ENCODE measurements at regions of chr9 and their contacts with region 1.

Region 1: DNA sequence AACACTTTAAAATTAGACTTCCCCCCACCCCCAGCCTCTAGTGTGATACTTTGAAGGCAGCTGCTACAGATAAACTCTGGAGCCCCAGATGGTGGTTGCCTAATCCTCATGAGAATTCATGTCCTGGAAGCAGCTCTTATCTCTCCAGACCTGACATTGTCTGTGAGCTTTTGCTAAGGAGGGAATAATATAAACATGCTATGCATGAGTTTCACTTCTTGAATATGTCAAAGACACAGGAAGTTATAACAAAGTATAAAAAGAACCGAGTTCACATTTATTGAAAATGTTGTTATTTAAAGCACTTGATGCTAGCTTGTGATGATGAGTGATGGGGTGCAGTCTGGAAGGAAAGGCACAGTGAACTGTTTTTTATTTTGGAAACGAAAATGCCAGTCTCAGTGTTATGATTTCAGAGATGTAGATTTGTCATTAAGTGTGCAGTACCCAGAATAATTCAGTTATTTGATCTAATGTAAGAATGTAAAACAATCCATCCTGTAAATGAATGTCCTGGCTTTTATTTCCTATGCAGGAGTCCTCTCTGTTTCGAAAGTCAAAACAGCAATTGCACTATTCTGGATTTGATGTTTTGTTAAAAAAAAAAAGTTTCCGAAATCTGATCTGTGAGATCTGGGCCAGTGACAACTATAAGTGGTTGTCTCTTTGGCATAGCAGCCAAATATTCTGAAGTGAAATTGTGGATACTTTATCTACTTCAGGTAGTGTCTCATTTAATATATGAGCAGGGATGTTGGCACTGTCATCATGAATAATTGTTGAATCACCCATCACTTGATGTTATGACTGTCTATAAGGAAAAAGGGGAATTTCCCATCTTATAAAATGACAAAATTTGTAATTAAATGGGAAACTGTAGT is 77.0 kb downstream of the ZCCHC7 start:
- DNase-seq: peak; percentile 83
- ATAC-seq: peak; percentile 79
- H3K4me3 ChIP-seq: peak overlapping the region in 3 of 5 experiments; percentile 13 to 35 (median 21)
- H3K4me3 Mint-ChIP-seq: peak overlapping the region; percentile 76
- H3K27ac ChIP-seq: peak overlapping the region; percentile 81 to 87
- H3K27ac Mint-ChIP-seq: peak overlapping the region; percentile 87
- H3K4me1 ChIP-seq: peaks cover 83 to 91% of the 10 kb centered on the region in 2 donors
- H3K4me1 Mint-ChIP-seq: peaks cover 82% of the 10 kb centered on the region
- H3K27me3 ChIP-seq: no peaks in the 10 kb centered on the region
- H3K27me3 Mint-ChIP-seq: no peaks in the 10 kb centered on the region
- CTCF ChIP-seq: no peak

Region 2: GRCh38 chr9:37302277-37302676 is 104.9 kb after region 1 on chr9:
- CTCF ChIA-PET with region 1: interaction called, 6 read pairs
- POLR2A ChIA-PET with region 1: no interaction called
- intact Hi-C with region 1: loop called (anchors 2 kb)
- DNase-seq: peak; percentile 88
- ATAC-seq: peak; percentile 90
- H3K4me3 ChIP-seq: peak overlapping the region in 3 of 5 experiments; percentile 5 to 42 (median 17)
- H3K4me3 Mint-ChIP-seq: peak overlapping the region; percentile 82
- H3K27ac ChIP-seq: peak overlapping the region; percentile 79 to 88
- H3K27ac Mint-ChIP-seq: peak overlapping the region; percentile 96
- H3K4me1 ChIP-seq: peaks cover 79 to 84% of the 10 kb centered on the region in 2 donors
- H3K4me1 Mint-ChIP-seq: peaks cover 81% of the 10 kb centered on the region
- H3K27me3 ChIP-seq: no peaks in the 10 kb centered on the region
- H3K27me3 Mint-ChIP-seq: no peaks in the 10 kb centered on the region
- CTCF ChIP-seq: no peak